Activated CD8-positive, alpha-beta T cell treated with anti-CD3 and anti-CD28 coated beads for 36 hours (primary cell): ENCODE measurements at regions of chr1 and their contacts with region 1.

Region 1: GRCh38 chr1:84506002-84506728 is at the starts of genes GNG5 and SPATA1:
- DNase-seq: peak; percentile 99
- ATAC-seq: peak; percentile 90
- H3K4me3 Mint-ChIP-seq: peak within 1 kb of the TSS; percentile 99
- H3K27ac Mint-ChIP-seq: peak within 1 kb of the TSS; percentile 99
- H3K4me1 Mint-ChIP-seq: peaks cover 27% of the 10 kb centered on the region
- H3K27me3 Mint-ChIP-seq: no peaks in the 10 kb centered on the region
- CTCF ChIP-seq: no peak
- total RNA-seq, gene GNG5: 101 to 106 TPM
- total RNA-seq, gene SPATA1: 2.5 to 3.0 TPM

Region 2: DNA sequence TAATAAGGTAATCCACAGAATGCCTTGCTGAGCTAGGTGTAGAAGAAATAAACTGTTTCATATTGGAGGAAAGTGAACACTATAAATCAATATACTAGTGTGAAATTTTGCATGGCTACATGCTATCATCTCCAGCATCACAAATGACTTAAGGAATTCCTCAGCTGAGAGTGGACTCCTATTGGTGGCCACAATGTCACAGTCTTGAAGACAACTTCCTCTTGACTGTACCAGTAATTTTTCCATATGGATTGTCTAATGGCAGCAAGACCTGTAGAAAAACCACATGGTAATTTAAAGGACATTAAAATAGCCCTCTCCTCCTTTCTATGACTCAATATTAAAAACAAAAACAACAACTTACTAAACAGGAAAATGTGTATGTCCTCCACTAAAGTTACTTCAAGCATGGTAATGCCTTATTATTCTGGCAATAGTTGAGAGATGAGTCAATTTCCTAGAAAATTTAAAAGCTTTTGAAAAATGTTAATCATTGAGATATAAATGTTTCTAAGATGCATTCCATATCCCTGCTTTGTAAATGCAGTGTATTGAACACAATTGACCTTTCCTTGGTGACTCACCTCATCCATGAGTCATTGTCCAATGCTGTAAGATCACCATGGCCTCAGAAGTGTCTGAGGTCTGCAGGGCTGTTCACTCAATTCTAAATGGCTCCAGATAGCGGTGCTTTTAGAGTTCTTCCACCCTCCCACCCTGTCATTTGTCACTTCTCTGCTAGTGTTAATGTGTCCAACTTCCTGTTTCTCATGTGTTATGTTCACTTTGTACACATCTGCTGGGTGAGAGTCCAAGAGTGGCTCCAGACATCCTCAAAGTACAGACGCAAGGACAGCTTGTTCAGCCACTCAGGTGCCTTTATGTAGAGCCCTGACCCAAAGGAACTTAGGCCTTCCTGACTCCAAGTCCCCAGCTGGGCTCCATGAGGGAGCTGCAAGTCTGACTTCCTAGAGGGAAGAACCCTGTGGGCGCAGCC is 140.6 kb before region 1 on chr1:
- CTCF ChIA-PET with region 1: no interaction called
- POLR2A ChIA-PET with region 1: no interaction called
- intact Hi-C with region 1: no loop called
- DNase-seq: peak; percentile 68
- ATAC-seq: peak; percentile 98
- H3K4me3 Mint-ChIP-seq: no peak overlapping the region
- H3K27ac Mint-ChIP-seq: peak overlapping the region; percentile 33
- H3K4me1 Mint-ChIP-seq: peaks cover 11% of the 10 kb centered on the region
- H3K27me3 Mint-ChIP-seq: no peaks in the 10 kb centered on the region
- CTCF ChIP-seq: no peak

Region 3: DNA sequence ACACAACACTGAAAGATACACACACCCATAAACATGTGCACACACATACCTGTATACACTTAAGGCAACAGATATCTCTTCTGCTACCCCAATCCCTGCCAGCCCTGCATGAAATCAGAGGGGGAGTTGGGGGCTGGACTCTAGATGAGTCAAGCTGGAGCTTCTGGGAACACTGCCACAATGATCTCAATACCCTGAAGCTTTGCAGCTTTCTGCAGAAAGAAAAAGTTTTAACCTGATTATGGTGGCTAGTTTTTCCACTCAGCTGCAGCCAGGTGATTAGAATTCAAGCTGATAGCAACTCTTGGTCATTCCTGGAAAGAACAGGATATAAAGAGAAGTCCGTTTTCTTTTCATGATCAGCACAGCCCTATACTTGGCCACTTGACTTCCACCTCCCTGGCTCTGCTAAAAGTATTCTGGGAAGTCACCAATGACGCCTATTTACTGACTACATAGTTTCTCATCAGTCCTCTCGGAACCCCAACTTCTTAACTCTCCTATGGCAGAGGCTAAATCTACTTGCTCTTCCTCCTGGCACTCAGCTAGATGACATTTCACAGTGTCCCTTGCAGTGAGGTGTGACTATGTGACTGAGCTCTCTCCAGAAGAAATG is 128.6 kb before region 1 on chr1:
- CTCF ChIA-PET with region 1: no interaction called
- POLR2A ChIA-PET with region 1: no interaction called
- intact Hi-C with region 1: no loop called
- DNase-seq: no peak
- ATAC-seq: no peak
- H3K4me3 Mint-ChIP-seq: no peak overlapping the region
- H3K27ac Mint-ChIP-seq: no peak overlapping the region
- H3K4me1 Mint-ChIP-seq: no peaks in the 10 kb centered on the region
- H3K27me3 Mint-ChIP-seq: no peaks in the 10 kb centered on the region
- CTCF ChIP-seq: no peak

Region 4: DNA sequence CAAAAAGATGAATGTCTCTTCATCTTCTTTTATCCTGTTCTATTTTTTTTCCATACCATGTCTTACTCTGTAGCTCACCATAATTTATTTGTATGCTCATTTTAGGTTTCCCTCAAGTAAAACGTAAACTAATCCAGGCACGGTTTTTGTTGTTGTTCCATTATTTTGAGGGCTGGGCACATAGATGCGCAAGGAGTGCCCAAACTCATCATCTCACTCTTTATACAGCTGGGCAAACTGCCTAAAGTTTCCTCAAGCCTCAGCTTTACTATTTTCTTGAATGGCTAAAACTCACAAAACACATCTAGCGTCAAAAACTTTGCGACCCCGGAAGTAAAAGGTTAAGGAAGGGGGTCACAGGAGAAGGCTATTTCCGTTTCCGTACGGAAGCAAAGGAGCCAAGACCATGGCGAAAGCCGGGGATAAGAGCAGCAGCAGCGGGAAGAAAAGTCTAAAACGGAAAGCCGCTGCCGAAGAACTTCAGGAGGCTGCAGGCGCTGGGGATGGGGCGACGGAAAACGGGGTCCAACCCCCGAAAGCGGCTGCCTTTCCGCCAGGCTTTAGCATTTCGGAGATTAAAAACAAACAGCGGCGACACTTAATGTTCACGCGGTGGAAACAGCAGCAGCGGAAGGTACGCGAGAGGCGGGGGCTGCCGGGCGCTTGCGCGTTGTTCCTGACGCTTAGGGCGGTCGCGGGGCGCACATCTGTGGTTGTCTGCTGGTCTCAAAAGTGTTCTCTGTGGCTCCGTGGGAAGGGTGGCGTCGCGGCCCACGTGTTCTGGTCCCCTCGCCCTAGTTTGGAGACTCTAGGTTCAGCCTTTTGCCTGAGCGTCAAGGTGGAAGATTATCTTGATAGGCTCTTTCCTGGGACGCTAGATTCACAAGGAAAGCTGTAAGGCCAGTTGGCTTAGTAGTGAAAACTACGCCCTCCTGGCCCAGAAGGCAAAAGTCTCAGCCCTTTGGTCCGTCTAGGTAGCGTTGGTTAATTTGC is 27.0 kb before region 1 on chr1 and contains the start of gene RPF1:
- CTCF ChIA-PET with region 1: interaction called, 3 read pairs
- POLR2A ChIA-PET with region 1: interaction called, 42 read pairs
- intact Hi-C with region 1: no loop called
- DNase-seq: peak; percentile 87
- ATAC-seq: peak; percentile 95
- H3K4me3 Mint-ChIP-seq: peak within 1 kb of the TSS; percentile 99
- H3K27ac Mint-ChIP-seq: peak within 1 kb of the TSS; percentile 99
- H3K4me1 Mint-ChIP-seq: peaks cover 38% of the 10 kb centered on the region
- H3K27me3 Mint-ChIP-seq: peaks cover 16% of the 10 kb centered on the region
- CTCF ChIP-seq: no peak
- total RNA-seq, gene RPF1: 61.9 to 64.1 TPM

Region 5: GRCh38 chr1:84493747-84494146 is 12.4 kb before region 1 on chr1:
- CTCF ChIA-PET with region 1: no interaction called
- POLR2A ChIA-PET with region 1: interaction called, 16 read pairs
- intact Hi-C with region 1: no loop called
- DNase-seq: no peak
- ATAC-seq: no peak
- H3K4me3 Mint-ChIP-seq: no peak overlapping the region
- H3K27ac Mint-ChIP-seq: peak overlapping the region; percentile 56
- H3K4me1 Mint-ChIP-seq: peaks cover 19% of the 10 kb centered on the region
- H3K27me3 Mint-ChIP-seq: no peaks in the 10 kb centered on the region
- CTCF ChIP-seq: no peak

Region 6: GRCh38 chr1:84573967-84574842 is 68.0 kb after region 1 on chr1 and contains the start of gene CTBS:
- CTCF ChIA-PET with region 1: interaction called, 4 read pairs
- POLR2A ChIA-PET with region 1: interaction called, 45 read pairs
- intact Hi-C with region 1: loop called (anchors 1 kb)
- DNase-seq: peak; percentile 89
- ATAC-seq: peak; percentile 89
- H3K4me3 Mint-ChIP-seq: peak within 1 kb of the TSS; percentile 98
- H3K27ac Mint-ChIP-seq: peak within 1 kb of the TSS; percentile 99
- H3K4me1 Mint-ChIP-seq: peaks cover 38% of the 10 kb centered on the region
- H3K27me3 Mint-ChIP-seq: no peaks in the 10 kb centered on the region
- CTCF ChIP-seq: no peak
- total RNA-seq, gene CTBS: 13.5 to 18.3 TPM

Region 7: DNA sequence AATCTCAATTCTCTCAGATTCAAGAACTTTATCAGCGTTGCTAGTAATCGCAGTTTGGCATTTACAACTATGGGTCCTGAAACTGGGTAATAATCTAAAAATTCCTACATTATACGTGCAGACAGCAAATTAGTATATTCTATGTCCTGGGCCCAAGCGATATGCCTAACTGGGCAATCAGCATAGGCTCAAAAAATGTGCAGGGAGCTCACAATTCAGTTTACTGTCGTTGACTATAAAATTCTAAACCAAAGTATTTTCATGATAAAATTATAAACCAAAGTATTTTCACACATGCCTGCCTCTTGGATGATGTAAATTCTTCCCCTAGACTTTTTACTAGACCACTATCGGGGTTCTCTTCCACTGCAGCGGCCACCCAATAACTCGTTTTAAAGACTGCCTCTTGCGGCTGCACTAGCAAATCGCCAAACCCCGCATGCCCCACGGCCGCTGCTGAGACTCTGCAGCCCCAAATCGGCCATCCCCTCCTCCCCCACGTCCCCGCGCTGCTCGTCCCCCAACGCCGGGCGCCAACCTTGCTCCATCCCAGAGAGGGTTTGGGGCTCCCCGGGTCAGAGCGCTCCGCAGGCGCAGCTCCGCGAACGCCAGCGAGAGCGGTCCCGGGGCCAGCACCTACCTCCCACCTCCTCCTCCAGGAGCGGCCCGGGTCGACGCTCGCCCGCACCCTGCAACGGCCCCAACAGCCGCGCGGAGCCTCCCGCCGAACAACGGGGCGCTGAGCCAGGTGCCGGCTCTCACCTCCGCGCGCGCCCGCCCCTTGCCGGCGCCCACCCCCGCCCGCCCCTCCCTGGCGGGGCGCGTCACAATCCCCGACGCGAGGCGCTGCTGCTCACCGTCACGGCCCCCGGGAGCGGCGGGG is 183.6 kb after region 1 on chr1:
- CTCF ChIA-PET with region 1: no interaction called
- POLR2A ChIA-PET with region 1: no interaction called
- intact Hi-C with region 1: loop called (anchors 5 kb)
- DNase-seq: peak; percentile 61
- ATAC-seq: no peak
- H3K4me3 Mint-ChIP-seq: peak overlapping the region; percentile 93
- H3K27ac Mint-ChIP-seq: peak overlapping the region; percentile 69
- H3K4me1 Mint-ChIP-seq: peaks cover 61% of the 10 kb centered on the region
- H3K27me3 Mint-ChIP-seq: no peaks in the 10 kb centered on the region
- CTCF ChIP-seq: no peak